ENCODE measurements at regions of chr9 and their contacts with region 1.

Region 1: GRCh38 chr9:75487856-75488718 is 399.8 kb downstream of the OSTF1 start:
- DNase-seq: no peak
- H3K4me3 ChIP-seq: no peak overlapping the region
- H3K27ac ChIP-seq: no peak overlapping the region
- H3K4me1 ChIP-seq: no peaks in the 10 kb centered on the region
- H3K27me3 ChIP-seq: no peaks in the 10 kb centered on the region
- CTCF ChIP-seq: no peak

Region 2: GRCh38 chr9:75289332-75289731 is 198.8 kb before region 1 on chr9:
- dilution Hi-C with region 1: no loop called
- DNase-seq: no peak
- H3K4me3 ChIP-seq: no peak overlapping the region
- H3K27ac ChIP-seq: no peak overlapping the region
- H3K4me1 ChIP-seq: no peaks in the 10 kb centered on the region
- H3K27me3 ChIP-seq: no peaks in the 10 kb centered on the region
- CTCF ChIP-seq: no peak

Region 3: GRCh38 chr9:75429531-75430475 is 58.3 kb before region 1 on chr9:
- dilution Hi-C with region 1: no loop called
- DNase-seq: no peak
- H3K4me3 ChIP-seq: no peak overlapping the region
- H3K27ac ChIP-seq: no peak overlapping the region
- H3K4me1 ChIP-seq: no peaks in the 10 kb centered on the region
- H3K27me3 ChIP-seq: no peaks in the 10 kb centered on the region
- CTCF ChIP-seq: no peak

Region 4: DNA sequence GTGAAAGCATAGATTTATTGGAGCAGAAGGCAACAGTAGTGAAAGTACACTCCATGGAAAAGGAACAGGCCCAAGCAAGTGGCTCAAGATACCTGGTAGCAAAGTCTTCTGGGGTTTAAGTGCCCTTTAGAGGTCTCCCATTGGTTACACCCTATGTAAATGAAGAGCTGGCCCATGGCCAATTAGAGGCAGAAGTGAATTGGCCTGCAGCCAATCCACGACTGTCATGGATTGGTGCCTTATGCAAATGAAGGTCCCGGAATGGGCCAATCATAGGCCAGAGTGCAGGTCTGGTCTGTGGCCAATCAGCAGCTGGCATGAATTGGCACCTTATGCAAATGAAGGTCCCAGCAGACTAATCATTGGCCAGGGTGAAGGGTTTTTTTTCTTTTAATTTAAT is 338.2 kb after region 1 on chr9:
- dilution Hi-C with region 1: loop called (anchors 25 kb)
- DNase-seq: no peak
- H3K4me3 ChIP-seq: no peak overlapping the region
- H3K27ac ChIP-seq: no peak overlapping the region
- H3K4me1 ChIP-seq: no peaks in the 10 kb centered on the region
- H3K27me3 ChIP-seq: no peaks in the 10 kb centered on the region
- CTCF ChIP-seq: no peak

Measured in keratinocyte (primary cell).